ENCODE measurements at regions of chr11 and their contacts with region 1.

Region 1: DNA sequence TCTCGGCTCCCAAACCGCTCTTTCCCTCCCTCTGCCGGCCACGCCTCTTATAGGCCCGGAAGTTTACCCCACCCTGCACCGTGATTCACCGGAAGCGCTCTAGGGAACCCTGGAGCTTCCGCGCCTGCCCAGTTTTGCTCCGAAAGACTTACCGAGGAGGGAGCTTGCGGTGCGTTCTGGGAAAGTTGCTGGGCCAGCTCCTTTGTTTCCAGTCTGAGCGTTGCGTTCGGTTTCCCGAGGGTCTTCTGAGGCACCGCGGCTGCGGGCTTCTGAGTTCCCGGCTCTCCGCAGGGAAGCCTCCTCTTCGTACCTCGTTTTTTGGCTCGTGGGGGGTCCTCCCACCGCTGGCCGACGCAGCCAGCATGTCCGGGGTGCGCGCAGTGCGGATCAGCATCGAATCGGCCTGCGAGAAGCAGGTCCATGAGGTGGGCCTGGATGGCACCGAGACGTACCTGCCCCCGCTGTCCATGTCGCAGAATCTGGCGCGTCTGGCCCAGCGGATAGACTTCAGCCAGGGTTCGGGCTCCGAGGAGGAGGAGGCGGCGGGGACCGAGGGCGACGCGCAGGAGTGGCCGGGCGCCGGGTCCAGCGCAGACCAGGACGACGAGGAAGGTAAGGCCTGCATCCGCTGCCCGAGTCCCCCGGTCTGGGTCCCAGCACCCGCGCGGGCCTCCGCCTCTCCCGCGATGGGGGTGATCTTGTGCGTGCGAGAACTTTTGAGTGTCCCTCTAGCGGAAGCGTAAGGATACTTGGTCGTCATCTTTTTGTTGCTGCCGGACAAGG is at the start of gene MED17:
- DNase-seq: peak; percentile 75 to 85
- H3K4me3 ChIP-seq: peak within 1 kb of the TSS; percentile 93 to 99 (median 95)
- H3K27ac ChIP-seq: peak within 1 kb of the TSS; percentile 95
- H3K4me1 ChIP-seq: peaks cover 0 to 4% (median 1%) of the 10 kb centered on the region in 4 experiments; a peak in 1 of 7 replicates
- H3K27me3 ChIP-seq: no peaks in the 10 kb centered on the region
- CTCF ChIP-seq: peak; percentile 7 to 26 (median 21); a peak in 3 of 4 replicates
- EP300 ChIP-seq: no peak
- POLR2A ChIP-seq: peak; percentile 89 to 90
- RAD21 ChIP-seq: no peak
- total RNA-seq, gene MED17: 30.4 and 33.7 TPM in 2 replicates

Region 2: GRCh38 chr11:93767018-93767417 is 17.3 kb before region 1 on chr11:
- CTCF ChIA-PET with region 1: interaction called, 12 read pairs
- POLR2A ChIA-PET with region 1: interaction called, 88 read pairs
- DNase-seq: no peak
- H3K4me3 ChIP-seq: no peak overlapping the region
- H3K27ac ChIP-seq: no peak overlapping the region
- H3K4me1 ChIP-seq: no peaks in the 10 kb centered on the region
- H3K27me3 ChIP-seq: no peaks in the 10 kb centered on the region
- CTCF ChIP-seq: no peak
- EP300 ChIP-seq: no peak
- POLR2A ChIP-seq: no peak
- RAD21 ChIP-seq: no peak

Region 3: DNA sequence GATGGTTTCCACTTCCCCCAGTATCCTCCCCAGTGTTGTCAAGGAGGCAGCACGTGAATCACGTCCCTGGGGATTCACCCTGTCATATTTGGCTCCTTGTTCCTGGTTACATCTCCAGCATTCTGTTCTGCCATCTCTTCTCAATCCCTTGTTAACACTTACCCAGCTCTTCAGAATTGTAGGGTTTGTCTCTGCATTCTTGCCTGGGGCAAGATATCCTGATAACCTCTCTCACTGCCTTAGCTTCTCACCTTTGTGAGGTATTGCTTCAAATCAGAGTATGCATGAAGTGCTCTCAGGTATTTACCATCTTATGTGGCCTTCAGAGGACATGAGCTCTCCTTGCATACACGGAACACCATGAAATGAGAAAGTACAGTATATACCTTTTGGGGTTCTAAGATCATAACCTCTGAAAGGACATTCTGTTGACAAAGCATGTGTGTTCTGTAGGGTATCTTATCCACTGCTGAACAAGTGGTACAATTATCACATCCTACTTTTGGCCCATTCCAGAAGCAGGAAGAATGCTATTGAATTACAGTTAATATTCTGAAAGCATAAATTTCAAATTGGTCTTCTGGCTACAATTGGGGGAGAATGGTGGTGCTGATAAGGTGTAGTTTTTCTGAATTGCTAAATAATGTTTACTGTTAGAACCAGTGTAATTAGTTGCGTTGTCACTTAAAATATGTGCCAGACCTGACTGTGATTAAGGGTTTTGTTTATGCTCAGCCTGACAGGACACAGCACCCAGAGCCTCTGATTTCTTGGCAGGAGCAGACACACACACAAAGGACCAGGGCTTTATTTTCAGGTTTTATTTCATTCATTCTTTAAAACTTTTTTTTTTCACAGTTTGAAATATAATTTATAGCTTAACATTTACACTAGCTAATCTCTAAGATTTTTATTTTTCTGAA is 33.3 kb after region 1 on chr11:
- CTCF ChIA-PET with region 1: no interaction called
- POLR2A ChIA-PET with region 1: interaction called, 10 read pairs
- DNase-seq: no peak
- H3K4me3 ChIP-seq: no peak overlapping the region
- H3K27ac ChIP-seq: no peak overlapping the region
- H3K4me1 ChIP-seq: peaks cover 3 to 15% (median 6%) of the 10 kb centered on the region in 4 experiments
- H3K27me3 ChIP-seq: no peaks in the 10 kb centered on the region
- CTCF ChIP-seq: no peak
- EP300 ChIP-seq: no peak
- POLR2A ChIP-seq: no peak
- RAD21 ChIP-seq: no peak

Region 4: GRCh38 chr11:94036096-94036495 is 251.8 kb after region 1 on chr11:
- CTCF ChIA-PET with region 1: no interaction called
- POLR2A ChIA-PET with region 1: no interaction called
- DNase-seq: no peak
- H3K4me3 ChIP-seq: no peak overlapping the region
- H3K27ac ChIP-seq: no peak overlapping the region
- H3K4me1 ChIP-seq: no peaks in the 10 kb centered on the region
- H3K27me3 ChIP-seq: no peaks in the 10 kb centered on the region; a peak in 1 of 7 replicates
- CTCF ChIP-seq: no peak
- EP300 ChIP-seq: no peak
- POLR2A ChIP-seq: no peak
- RAD21 ChIP-seq: peak in 1 of 2 experiments; percentile 7; a peak in 1 of 4 replicates